MCF 10A (cell line): ENCODE measurements at regions of chr12 and their contacts with region 1.

Region 1: DNA sequence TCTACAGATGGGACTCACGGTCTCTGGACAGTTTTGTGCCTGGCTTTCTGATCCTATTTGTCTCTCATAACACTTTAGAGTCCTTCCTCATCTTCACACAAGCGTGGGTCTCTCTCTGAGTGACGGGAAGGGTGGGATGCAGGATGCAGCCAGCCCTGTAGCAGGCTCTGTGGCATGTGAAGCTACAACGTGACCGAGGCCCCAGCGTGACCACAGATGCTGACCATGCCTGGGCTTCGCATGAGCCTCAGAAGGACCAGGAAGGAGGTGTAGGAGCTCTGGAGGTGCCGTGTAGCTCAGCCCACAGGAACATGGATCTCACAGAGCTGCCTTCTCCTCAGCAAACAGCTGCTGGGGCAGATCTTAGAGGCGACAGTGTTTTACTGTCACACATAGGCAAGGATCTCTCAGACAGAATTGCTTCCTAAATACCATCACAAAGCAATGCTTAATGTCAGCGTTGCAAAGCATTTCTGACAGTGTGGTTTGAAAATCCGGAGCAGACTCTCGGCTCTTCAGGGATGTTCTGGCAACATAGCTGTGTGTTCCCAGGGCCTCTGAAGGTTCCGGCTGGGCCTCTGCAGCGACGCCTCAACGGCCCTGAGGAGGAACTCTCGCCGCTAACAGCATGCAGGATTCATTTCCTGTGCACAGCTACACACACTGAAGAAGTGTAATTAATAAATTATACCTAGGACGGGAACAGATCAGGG is 21.9 kb downstream of the ANKLE2 start:
- DNase-seq: no peak
- H3K4me3 Mint-ChIP-seq: no peak overlapping the region
- H3K27ac Mint-ChIP-seq: no peak overlapping the region
- H3K4me1 Mint-ChIP-seq: no peaks in the 10 kb centered on the region
- H3K27me3 Mint-ChIP-seq: no peaks in the 10 kb centered on the region
- CTCF ChIP-seq: no peak

Region 2: DNA sequence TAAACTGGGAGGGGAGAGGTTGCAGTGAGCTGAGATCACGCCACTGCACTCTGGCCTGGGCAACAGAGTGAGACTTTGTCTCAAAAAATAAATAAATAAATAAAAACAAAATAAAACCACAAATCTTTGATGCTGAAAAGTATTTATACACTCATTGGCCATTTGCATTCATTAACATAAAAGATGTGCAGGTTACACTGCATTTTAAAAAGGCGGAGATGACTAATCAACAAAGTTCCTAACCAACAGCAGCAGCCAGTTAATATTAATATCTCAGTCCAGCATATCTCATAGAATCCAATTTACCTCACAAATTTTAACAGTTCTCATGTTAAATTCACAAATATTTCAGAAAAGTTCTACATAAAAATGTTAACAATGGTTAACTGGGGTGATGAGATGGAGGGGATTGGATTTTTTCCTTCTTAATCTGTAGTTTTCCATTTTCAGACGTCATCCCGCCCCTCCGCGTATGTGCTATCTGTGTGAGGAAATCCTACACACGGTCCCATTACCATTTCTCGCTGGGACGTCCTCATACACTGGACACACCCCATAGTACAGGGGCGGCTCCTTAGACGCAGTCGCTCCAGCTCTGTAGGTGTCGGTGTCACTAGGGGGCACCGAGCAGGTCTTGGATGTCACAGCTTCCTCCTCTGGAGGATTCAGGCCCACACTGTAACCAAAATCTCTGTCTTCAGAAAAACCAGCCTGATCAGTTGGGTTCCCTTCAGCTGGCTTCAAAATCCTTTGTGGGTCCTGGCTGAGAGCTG is 14.6 kb after region 1 on chr12:
- CTCF ChIA-PET with region 1: no interaction called
- POLR2A ChIA-PET with region 1: interaction called, 10 read pairs
- intact Hi-C with region 1: no loop called
- DNase-seq: no peak
- H3K4me3 Mint-ChIP-seq: no peak overlapping the region
- H3K27ac Mint-ChIP-seq: no peak overlapping the region
- H3K4me1 Mint-ChIP-seq: peaks cover 4% of the 10 kb centered on the region
- H3K27me3 Mint-ChIP-seq: no peaks in the 10 kb centered on the region
- CTCF ChIP-seq: no peak